Activated CD4-positive, alpha-beta memory T cell treated with anti-CD3 and anti-CD28 coated beads for 36 hours (primary cell): ENCODE measurements at regions of chr20 and their contacts with region 1.

Region 1: DNA sequence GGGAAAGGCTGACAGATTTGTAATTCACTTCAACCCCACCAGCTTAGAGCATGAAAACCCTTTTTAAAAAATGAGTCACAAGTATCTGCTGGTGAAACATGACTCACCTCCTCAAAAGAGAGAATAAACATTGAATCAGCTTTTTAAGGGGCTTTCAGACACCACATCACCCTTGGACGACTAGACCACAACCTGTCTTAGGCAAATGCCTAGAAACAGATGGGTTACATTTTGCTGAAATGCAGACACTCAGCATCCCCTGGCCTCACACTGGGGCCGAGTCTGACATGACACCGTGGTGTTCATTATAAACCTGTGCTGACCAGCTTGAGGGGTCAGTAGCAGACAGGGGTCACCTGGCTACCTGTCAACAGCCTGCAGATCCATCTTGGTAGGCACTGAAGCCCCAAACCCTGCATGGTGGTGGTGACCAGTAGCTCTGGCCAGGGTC is 175.3 kb upstream of the CST7 start:
- DNase-seq: peak; percentile 42
- H3K4me3 Mint-ChIP-seq: no peak overlapping the region
- H3K27ac Mint-ChIP-seq: no peak overlapping the region
- H3K4me1 Mint-ChIP-seq: peaks cover 8% of the 10 kb centered on the region
- H3K27me3 Mint-ChIP-seq: peaks cover 30% of the 10 kb centered on the region

Region 2: GRCh38 chr20:24694727-24695597 is 78.8 kb before region 1 on chr20:
- CTCF ChIA-PET with region 1: no interaction called
- POLR2A ChIA-PET with region 1: no interaction called
- intact Hi-C with region 1: no loop called
- DNase-seq: no peak
- H3K4me3 Mint-ChIP-seq: no peak overlapping the region
- H3K27ac Mint-ChIP-seq: no peak overlapping the region
- H3K4me1 Mint-ChIP-seq: no peaks in the 10 kb centered on the region
- H3K27me3 Mint-ChIP-seq: peaks cover 9% of the 10 kb centered on the region

Region 3: DNA sequence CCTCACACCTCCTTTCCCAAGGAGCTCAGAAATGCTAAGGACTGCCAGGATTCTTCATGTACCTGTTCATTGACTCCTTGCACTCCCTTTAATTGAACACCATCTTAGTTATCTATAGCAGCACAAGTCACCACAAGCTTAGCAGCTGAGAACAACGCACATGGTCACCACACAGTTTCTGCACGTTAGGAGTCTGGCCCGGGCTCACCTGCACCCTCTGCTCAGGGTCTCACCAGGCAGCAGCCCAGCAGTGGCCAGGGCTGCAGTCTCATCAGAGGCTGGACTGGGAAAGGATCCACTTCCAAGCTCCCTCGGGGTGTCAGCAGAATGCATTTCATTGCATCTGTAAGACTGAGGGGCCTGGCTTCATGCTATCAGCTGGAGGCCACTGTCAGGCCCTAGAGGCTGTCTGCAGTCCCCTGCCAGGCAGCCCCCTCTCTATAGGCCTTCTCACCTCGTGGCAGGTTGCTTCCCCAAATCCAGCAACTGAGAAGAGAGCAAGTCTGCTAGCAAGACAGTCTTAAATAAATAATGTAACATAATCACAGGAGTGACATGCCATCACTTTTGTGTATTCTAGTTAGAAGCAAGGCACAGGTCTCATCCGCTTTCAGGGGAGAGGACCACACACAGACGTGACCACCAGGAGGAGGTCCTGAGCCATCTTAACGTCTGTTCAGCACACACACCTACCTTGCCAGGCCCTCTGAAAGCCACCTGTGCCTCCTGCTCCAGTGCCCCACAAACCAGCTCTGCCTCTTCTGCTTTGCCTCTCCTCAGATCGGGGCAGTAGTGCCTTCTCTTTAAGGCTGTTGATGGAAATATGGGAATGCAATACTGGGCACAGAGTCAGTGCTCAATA is 10.1 kb after region 1 on chr20:
- CTCF ChIA-PET with region 1: no interaction called
- POLR2A ChIA-PET with region 1: no interaction called
- intact Hi-C with region 1: no loop called
- DNase-seq: peak; percentile 25
- H3K4me3 Mint-ChIP-seq: no peak overlapping the region
- H3K27ac Mint-ChIP-seq: no peak overlapping the region
- H3K4me1 Mint-ChIP-seq: no peaks in the 10 kb centered on the region
- H3K27me3 Mint-ChIP-seq: peaks cover 5% of the 10 kb centered on the region

Region 4: DNA sequence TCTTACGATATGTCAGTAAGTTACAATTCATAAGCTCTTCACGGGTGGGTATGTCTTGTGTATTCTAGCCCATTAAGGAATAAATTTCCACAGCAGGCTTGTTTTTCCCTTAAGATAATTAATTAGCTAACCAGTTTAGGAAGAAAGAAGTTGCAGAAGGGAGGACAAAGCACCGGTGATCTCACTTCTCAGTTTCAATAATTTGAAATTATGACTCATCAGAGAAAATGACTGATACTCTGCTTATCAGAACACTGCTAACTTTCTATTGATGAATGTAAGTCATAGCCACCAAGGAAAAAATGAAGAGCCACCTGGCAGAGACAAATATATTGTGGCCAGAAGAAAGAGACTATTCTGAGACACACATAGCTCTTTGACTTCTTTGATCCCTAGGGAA is 386.7 kb after region 1 on chr20:
- CTCF ChIA-PET with region 1: no interaction called
- POLR2A ChIA-PET with region 1: no interaction called
- intact Hi-C with region 1: loop called (anchors 5 kb)
- DNase-seq: no peak
- H3K4me3 Mint-ChIP-seq: no peak overlapping the region
- H3K27ac Mint-ChIP-seq: peak overlapping the region; percentile 19
- H3K4me1 Mint-ChIP-seq: peaks cover 21% of the 10 kb centered on the region
- H3K27me3 Mint-ChIP-seq: peaks cover 13% of the 10 kb centered on the region